HAP-1 (cell line): ENCODE measurements at regions of chr1 and their contacts with region 1.

Region 1: GRCh38 chr1:99180343-99180808 is 83.9 kb upstream of the PLPPR4 start:
- DNase-seq: peak; percentile 85 to 91
- H3K4me3 ChIP-seq: no peak overlapping the region
- H3K4me1 ChIP-seq: peaks cover 12% of the 10 kb centered on the region
- H3K27me3 ChIP-seq: no peaks in the 10 kb centered on the region

Region 2: DNA sequence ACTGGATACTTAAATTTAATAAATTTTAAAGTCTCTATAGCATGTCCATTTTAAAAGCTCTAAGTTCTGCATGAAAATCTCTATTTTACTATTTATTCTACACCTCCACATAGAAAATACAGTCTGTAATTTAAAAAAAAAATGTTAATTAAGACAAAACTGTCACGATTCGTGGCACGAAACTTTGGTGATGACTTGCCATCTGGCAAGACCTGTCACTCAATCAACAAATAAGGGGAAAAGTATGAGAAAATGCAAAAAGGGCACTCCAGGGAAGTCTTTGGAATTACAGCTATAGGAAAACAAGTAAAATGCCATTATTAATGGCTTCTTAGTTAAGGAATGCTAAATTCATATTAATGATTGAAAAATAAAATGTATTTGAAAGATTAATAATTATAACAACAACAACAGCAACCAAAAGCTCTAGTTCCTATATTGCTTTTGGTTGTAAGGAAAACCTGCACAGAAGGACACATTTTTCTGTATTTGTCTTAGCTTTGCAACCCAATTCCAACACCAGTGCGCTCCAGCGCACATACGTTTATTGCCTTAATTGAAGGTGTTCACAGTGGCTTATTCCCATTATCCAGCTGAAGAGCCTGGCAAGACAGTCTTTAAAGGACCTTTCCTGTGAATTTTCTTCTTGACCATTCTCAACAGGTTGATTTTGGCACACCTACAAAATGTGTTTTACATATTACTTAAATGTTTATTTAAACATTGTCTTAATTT is 283.5 kb before region 1 on chr1:
- in situ Hi-C with region 1: no loop called
- DNase-seq: no peak
- H3K4me3 ChIP-seq: no peak overlapping the region
- H3K4me1 ChIP-seq: no peaks in the 10 kb centered on the region
- H3K27me3 ChIP-seq: no peaks in the 10 kb centered on the region

Region 3: DNA sequence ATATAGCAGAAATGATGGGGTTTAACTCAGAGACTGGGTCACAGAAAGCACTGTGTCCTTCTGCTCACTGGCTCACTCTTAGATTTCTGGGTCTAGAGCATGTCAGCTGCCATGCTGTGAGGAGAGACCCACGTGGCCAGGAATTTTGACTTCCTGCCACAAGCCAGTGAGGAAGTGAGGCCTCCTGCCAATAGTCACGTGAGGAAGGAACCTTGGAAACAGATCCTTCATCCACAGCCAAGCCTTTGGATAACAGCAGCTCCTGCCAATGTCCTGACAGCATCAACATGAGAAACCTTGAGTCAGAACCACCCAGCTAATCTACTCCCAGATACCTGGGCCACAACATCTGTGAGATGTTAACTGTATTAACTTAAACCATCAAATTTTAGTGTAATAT is 61.2 kb before region 1 on chr1:
- in situ Hi-C with region 1: no loop called
- DNase-seq: no peak
- H3K4me3 ChIP-seq: no peak overlapping the region
- H3K4me1 ChIP-seq: no peaks in the 10 kb centered on the region
- H3K27me3 ChIP-seq: no peaks in the 10 kb centered on the region

Region 4: GRCh38 chr1:99441299-99442095 is 261.1 kb after region 1 on chr1:
- in situ Hi-C with region 1: no loop called
- DNase-seq: no peak
- H3K4me3 ChIP-seq: no peak overlapping the region
- H3K4me1 ChIP-seq: no peaks in the 10 kb centered on the region
- H3K27me3 ChIP-seq: no peaks in the 10 kb centered on the region

Region 5: GRCh38 chr1:99457381-99458165 is 277.2 kb after region 1 on chr1:
- in situ Hi-C with region 1: loop called (anchors 25 kb)
- DNase-seq: no peak
- H3K4me3 ChIP-seq: no peak overlapping the region
- H3K4me1 ChIP-seq: peaks cover 7% of the 10 kb centered on the region; the same call in 1 of the 2 replicates
- H3K27me3 ChIP-seq: no peaks in the 10 kb centered on the region